ENCODE measurements at regions of chr13 and their contacts with region 1.

Region 1: DNA sequence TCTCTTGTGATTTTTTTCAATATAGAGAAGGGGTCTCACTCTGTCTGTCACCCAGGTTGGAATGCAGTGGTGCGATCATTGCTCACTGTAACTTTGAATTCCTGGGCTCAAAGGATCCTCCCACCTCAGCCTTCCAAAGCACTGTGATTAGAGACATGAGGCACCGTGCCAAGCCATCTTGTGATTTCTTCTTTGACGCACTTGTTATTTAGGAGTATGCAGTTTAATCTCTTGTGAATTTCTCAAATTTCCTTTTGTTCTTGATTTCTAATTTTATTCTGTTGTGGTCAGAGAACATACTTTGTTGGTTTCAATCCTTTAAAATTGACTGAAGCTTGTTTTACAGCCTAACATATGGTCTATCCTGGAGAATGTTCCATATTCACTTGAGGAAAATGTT is 14.5 kb downstream of the IPO5 start:
- DNase-seq: no peak
- ATAC-seq: no peak
- H3K4me3 ChIP-seq: no peak overlapping the region
- H3K27ac ChIP-seq: no peak overlapping the region
- H3K4me1 ChIP-seq: no peaks in the 10 kb centered on the region
- H3K27me3 ChIP-seq: no peaks in the 10 kb centered on the region
- CTCF ChIP-seq: no peak

Region 2: GRCh38 chr13:97798836-97799235 is 169.1 kb before region 1 on chr13:
- CTCF ChIA-PET with region 1: no interaction called
- POLR2A ChIA-PET with region 1: interaction called, 10 read pairs
- in situ Hi-C with region 1: no loop called
- intact Hi-C with region 1: no loop called
- DNase-seq: no peak
- ATAC-seq: no peak
- H3K4me3 ChIP-seq: no peak overlapping the region
- H3K27ac ChIP-seq: no peak overlapping the region
- H3K4me1 ChIP-seq: no peaks in the 10 kb centered on the region
- H3K27me3 ChIP-seq: no peaks in the 10 kb centered on the region
- CTCF ChIP-seq: no peak